CD8-positive, alpha-beta memory T cell (primary cell): ENCODE measurements at regions of chr20 and their contacts with region 1.

Region 1: DNA sequence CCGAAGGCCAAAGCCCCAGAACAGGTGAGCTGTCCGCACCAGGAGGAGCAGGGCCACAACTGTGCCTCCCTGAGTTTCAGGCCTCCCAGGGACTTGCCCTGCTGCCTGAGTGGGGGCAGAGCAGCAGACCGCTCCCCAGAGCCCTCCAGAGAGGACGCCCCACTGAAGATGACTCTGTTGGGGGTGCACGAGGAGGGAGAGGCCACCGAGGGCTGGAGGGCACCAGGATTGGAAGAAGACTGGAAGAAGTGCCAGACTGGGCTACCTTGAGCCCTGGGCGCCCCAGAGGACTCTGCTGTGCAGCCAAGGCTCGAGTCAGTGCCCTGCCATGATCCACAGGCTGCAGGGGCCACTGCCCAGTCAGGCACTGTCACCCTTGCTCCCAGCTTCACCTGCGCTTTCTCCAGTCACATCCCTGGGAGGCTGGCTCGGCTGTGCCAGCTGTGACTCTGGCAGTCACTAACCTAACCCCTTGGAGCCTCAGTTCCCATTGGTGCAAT is 11.3 kb downstream of the CST7 start:
- DNase-seq: peak in 1 of 5 donors; percentile 50
- H3K4me3 ChIP-seq: no peak overlapping the region
- H3K4me3 Mint-ChIP-seq: peak overlapping the region; percentile 24 to 92 (median 73)
- H3K27ac ChIP-seq: peak overlapping the region; percentile 90
- H3K27ac Mint-ChIP-seq: peak overlapping the region; percentile 97 to 100 (median 99)
- H3K4me1 ChIP-seq: peaks cover 84% of the 10 kb centered on the region
- H3K4me1 Mint-ChIP-seq: peaks cover 70 to 96% (median 80%) of the 10 kb centered on the region in 3 donors
- H3K27me3 ChIP-seq: no peaks in the 10 kb centered on the region
- H3K27me3 Mint-ChIP-seq: peaks cover 0 to 2% of the 10 kb centered on the region in 2 donors

Region 2: DNA sequence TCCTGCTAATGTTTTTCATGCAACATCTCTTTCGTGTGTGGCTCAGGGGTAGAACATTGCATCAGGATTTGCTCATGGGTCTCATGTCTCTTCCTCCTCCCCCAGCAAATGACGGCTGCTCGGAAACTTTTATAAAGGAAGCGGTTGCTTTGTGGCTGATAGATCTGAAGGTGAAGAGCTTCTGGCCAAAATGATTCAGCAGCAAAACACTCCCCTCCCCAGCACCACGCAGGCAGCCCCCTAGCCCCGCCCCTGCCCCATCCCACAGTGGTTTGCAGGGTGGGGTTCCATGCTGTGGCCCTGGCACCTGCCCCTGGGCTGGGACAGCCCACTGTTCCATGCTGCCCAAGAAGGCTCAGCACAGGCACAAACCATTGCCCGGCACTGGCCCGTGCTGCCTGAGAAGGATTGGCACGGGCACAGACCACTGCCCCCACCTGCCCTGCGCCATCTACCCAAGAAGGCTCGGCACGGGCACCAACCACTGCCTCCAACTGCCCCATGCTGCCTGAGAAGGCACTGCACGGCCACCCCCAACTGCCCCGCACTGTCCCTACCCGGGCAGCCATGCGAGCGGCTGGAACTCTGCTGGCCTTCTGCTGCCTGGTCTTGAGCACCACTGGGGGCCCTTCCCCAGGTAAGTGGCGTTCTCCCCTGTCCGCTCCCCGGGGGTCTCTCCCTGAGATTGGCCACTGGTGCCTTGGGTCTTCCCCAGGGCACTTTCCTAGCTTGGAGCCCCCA is 11.2 kb before region 1 on chr20 and contains the start of gene CST7:
- CTCF ChIA-PET with region 1: interaction called, 19 read pairs
- POLR2A ChIA-PET with region 1: interaction called, 34 read pairs
- DNase-seq: peak; percentile 70 to 96 (median 87)
- H3K4me3 ChIP-seq: peak within 1 kb of the TSS; percentile 81
- H3K4me3 Mint-ChIP-seq: peak within 1 kb of the TSS; percentile 90 to 99 (median 96)
- H3K27ac ChIP-seq: peak within 1 kb of the TSS; percentile 94
- H3K27ac Mint-ChIP-seq: peak within 1 kb of the TSS; percentile 92 to 100 (median 98)
- H3K4me1 ChIP-seq: peaks cover 27% of the 10 kb centered on the region
- H3K4me1 Mint-ChIP-seq: peaks cover 68 to 92% (median 72%) of the 10 kb centered on the region in 3 donors
- H3K27me3 ChIP-seq: no peaks in the 10 kb centered on the region
- H3K27me3 Mint-ChIP-seq: no peaks in the 10 kb centered on the region
- total RNA-seq, gene CST7: 124 to 131 TPM

Region 3: DNA sequence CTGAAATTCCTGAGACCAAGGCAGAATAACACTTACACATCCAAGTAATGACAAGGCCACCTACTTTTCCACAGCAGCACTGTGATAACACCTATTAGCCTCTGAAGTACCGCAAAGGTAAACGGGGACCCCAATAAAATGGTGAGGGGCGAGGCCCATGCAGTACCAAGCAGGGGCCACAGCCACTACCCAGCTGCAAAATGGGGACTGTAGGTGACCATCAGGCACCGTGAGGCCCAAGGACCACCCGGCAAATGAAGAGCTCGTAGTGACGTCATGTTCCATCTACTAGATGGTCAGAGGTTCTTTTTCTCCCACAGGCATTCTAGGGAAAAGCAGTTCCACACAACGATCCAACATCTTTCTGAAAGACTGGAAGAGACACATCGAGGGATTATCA is 12.9 kb after region 1 on chr20:
- CTCF ChIA-PET with region 1: no interaction called
- POLR2A ChIA-PET with region 1: no interaction called
- DNase-seq: peak in 1 of 5 donors; percentile 20
- H3K4me3 ChIP-seq: no peak overlapping the region
- H3K4me3 Mint-ChIP-seq: no peak overlapping the region
- H3K27ac ChIP-seq: no peak overlapping the region
- H3K27ac Mint-ChIP-seq: peak overlapping the region in 2 of 8 donors; percentile 46 to 72
- H3K4me1 ChIP-seq: no peaks in the 10 kb centered on the region
- H3K4me1 Mint-ChIP-seq: peaks cover 45 to 57% (median 57%) of the 10 kb centered on the region in 3 donors
- H3K27me3 ChIP-seq: no peaks in the 10 kb centered on the region
- H3K27me3 Mint-ChIP-seq: no peaks in the 10 kb centered on the region